ENCODE measurements at regions of chr15 and their contacts with region 1.

Region 1: DNA sequence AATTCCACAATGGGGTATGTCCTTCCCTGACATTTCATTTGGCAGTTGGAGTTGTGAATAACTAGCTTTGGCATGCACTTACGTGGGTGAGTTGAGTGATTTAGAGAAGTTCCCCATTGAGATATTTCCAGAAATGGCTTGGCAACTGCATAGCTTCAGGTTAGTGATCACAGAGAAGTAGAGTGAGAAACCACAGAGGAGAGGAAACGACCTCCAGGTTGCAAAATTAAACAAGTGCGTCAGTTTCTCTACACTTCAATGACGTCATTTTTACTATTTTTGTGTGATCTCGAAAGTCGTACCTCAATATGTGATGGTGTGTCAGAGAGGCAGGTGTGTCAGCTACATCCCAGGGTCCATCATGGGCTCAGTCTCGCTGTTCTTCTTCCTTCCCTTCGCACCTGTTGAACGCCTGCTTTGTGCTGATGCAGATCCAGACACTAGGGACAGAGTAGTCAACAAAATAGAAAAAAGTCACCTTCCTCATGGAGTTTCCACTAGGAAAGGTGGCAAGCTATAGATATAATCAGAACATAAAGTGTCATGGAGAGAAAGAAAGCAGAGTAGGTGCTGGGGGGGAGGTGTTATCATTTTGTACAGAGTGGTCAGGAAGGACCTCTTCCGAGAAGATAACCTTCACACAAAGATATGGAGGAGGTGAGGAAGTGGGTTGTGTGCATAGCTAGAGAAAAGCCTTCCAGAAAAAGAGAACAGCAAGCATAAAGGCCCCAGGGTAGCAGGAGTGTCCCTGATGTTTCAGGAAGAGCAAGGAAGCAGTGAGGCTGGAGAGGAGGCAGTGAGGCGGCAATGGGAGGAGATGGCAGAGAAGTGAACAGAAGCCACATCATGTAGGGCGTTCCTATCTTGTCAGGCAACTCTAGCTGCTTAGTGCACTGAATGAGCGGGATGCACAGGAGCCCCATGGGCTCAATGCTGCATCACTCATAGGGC is 75.6 kb downstream of the MCTP2 start:
- DNase-seq: peak; percentile 18
- H3K4me3 Mint-ChIP-seq: peak overlapping the region; percentile 30
- H3K27ac Mint-ChIP-seq: peak overlapping the region; percentile 96
- H3K4me1 Mint-ChIP-seq: peaks cover 76% of the 10 kb centered on the region
- H3K27me3 Mint-ChIP-seq: no peaks in the 10 kb centered on the region

Region 2: DNA sequence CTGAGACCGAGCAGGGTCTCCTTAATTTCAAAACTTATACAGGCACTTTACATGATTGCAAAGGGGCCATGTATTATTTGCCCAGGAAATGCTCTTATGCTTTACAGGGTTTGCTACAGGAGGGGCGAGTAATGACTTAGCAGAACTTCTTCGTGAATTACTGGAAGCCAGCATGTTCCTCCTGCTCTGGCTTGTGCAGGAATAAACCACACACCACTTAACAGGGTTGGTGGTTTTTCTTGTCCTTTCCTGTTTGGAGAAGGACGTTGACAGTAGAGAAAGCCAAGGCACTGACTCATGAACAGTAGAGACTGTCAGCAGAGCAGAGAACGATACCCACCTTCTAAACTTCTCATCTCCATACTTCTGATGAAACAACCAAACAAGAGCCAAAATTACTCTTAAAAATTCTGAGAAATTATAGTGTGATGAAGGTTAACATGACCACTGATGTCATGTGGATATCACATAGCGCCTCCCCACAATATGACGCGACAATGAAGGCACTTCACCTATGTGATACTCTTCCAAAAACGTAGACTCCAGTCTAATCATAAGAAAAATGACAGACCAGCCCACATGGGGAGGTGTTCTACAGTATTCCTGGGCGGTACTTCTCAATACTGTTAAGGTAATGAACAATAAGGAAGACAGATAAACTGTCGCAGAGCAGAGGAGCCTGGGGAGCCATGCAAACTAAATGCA is 100.4 kb before region 1 on chr15:
- intact Hi-C with region 1: loop called (anchors 1 kb)
- DNase-seq: peak; percentile 61
- H3K4me3 Mint-ChIP-seq: peak overlapping the region; percentile 60
- H3K27ac Mint-ChIP-seq: peak overlapping the region; percentile 96
- H3K4me1 Mint-ChIP-seq: peaks cover 40% of the 10 kb centered on the region
- H3K27me3 Mint-ChIP-seq: no peaks in the 10 kb centered on the region

Region 3: GRCh38 chr15:94272251-94272898 is 34.6 kb before region 1 on chr15:
- intact Hi-C with region 1: loop called (anchors 1 kb)
- DNase-seq: no peak
- H3K4me3 Mint-ChIP-seq: no peak overlapping the region
- H3K27ac Mint-ChIP-seq: no peak overlapping the region
- H3K4me1 Mint-ChIP-seq: peaks cover 31% of the 10 kb centered on the region
- H3K27me3 Mint-ChIP-seq: no peaks in the 10 kb centered on the region

Region 4: DNA sequence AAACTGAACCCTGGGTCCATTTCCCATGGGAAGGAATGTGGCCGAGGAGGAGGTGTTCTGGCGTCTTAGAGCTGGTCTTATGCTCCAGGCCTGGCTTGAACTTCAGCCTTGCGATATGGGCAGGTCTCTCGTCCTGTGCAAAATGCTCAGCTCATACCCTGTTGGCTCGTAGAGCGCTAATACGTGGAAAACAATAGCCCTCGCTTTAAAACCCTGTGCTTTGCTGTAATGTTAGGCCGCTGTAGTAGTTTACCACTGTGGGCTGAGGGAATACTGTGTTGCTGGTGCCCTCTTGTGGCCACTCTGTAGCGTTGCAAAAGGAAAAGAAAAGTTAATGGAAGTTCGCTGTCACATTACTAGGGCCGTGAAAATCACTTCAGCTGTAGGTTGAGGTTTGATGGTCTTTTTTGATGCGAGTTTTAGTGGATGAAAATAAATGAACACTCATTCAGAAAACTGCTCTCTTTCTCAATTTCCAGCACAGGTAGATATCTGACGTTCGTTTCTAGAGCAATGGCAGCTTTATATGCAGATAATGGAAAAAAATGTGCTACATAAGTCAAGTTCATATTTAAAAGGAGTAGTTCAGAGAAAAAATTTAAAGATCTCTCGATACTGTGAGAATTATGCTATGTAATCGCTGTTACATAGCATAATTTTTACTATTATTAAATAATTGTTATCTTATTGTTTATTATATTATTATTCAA is 17.3 kb after region 1 on chr15:
- intact Hi-C with region 1: loop called (anchors 1 kb)
- DNase-seq: peak; percentile 44
- H3K4me3 Mint-ChIP-seq: no peak overlapping the region
- H3K27ac Mint-ChIP-seq: peak overlapping the region; percentile 5
- H3K4me1 Mint-ChIP-seq: peaks cover 30% of the 10 kb centered on the region
- H3K27me3 Mint-ChIP-seq: no peaks in the 10 kb centered on the region

Region 5: GRCh38 chr15:95284933-95285421 is 978.0 kb after region 1 on chr15:
- intact Hi-C with region 1: loop called (anchors 10 kb)
- DNase-seq: peak; percentile 57
- H3K4me3 Mint-ChIP-seq: peak overlapping the region; percentile 43
- H3K27ac Mint-ChIP-seq: peak overlapping the region; percentile 45
- H3K4me1 Mint-ChIP-seq: peaks cover 61% of the 10 kb centered on the region
- H3K27me3 Mint-ChIP-seq: peaks cover 49% of the 10 kb centered on the region